ENCODE measurements at regions of chr3 and their contacts with region 1.

Region 1: GRCh38 chr3:194682694-194683310 is 2.9 kb upstream of the FAM43A start:
- DNase-seq: peak; percentile 74
- H3K4me3 Mint-ChIP-seq: no peak overlapping the region
- H3K27ac Mint-ChIP-seq: no peak overlapping the region
- H3K4me1 Mint-ChIP-seq: peaks cover 29% of the 10 kb centered on the region
- H3K27me3 Mint-ChIP-seq: peaks cover 13% of the 10 kb centered on the region

Region 2: DNA sequence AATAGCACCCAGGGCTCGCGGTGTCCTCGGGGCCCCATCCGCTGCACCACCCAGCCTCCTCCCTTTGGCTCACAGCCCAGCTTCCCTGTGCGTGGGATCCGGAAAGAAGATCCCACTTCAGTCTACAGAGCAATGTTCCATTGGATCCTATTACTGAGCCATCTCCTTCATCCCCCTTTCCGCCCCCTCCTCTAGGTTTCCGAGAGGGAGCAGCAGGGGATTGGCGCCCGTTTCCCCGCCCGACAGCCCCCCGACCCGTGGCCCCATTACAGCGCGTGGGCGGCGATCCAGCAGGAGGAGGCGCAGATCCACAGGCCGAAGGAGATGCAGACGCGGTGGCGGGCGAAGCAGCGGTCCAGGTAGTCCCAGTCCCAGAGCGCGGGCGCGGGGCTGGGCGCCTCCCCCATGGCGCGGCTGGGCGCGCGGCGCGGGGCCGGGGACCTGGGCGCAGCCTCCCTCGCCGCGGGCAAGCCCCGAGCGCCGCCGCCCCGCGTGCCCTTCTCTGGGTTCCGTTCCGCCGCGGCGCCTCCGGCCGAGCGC is 49.9 kb before region 1 on chr3:
- CTCF ChIA-PET with region 1: no interaction called
- intact Hi-C with region 1: no loop called
- DNase-seq: peak; percentile 24
- H3K4me3 Mint-ChIP-seq: peak overlapping the region; percentile 85
- H3K27ac Mint-ChIP-seq: peak overlapping the region; percentile 53
- H3K4me1 Mint-ChIP-seq: peaks cover 6% of the 10 kb centered on the region
- H3K27me3 Mint-ChIP-seq: no peaks in the 10 kb centered on the region

Region 3: GRCh38 chr3:194700241-194700640 is 17.4 kb after region 1 on chr3:
- CTCF ChIA-PET with region 1: interaction called, 10 read pairs
- intact Hi-C with region 1: no loop called
- DNase-seq: no peak
- H3K4me3 Mint-ChIP-seq: no peak overlapping the region
- H3K27ac Mint-ChIP-seq: no peak overlapping the region
- H3K4me1 Mint-ChIP-seq: no peaks in the 10 kb centered on the region
- H3K27me3 Mint-ChIP-seq: no peaks in the 10 kb centered on the region

Region 4: DNA sequence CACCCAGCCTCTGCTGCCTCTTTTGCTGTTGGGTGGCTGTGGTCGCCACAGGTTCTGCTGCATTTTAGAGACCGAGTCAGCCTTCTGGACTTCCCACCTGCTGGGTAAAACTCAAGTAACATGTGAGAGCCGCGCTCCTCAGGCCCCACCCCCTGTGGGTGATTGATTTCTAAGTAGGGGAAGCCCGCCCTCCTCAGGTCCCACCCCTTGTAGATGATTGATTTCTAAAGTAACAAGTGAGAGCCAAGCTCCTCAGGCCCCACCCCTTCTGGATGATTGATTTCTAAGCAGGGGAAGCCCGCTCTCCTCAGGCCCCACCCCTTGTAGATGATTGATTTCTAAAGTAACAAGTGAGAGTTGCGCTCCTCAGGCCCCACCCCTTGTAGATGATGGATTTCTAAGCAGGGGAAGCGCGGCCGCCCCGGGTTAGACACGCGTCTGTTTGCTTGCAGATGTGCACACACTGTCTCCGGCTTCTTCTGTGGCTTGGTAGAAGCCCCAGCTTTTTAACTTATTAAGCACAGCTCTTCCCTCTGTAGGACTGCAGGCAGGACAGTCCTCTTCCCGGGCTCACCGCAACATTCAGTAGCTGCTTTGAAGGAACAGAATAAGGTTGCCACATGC is 86.3 kb after region 1 on chr3:
- CTCF ChIA-PET with region 1: interaction called, 5 read pairs
- intact Hi-C with region 1: loop called (anchors 1 kb)
- DNase-seq: peak; percentile 99
- H3K4me3 Mint-ChIP-seq: peak overlapping the region; percentile 70
- H3K27ac Mint-ChIP-seq: peak overlapping the region; percentile 66
- H3K4me1 Mint-ChIP-seq: peaks cover 11% of the 10 kb centered on the region
- H3K27me3 Mint-ChIP-seq: no peaks in the 10 kb centered on the region

Region 5: DNA sequence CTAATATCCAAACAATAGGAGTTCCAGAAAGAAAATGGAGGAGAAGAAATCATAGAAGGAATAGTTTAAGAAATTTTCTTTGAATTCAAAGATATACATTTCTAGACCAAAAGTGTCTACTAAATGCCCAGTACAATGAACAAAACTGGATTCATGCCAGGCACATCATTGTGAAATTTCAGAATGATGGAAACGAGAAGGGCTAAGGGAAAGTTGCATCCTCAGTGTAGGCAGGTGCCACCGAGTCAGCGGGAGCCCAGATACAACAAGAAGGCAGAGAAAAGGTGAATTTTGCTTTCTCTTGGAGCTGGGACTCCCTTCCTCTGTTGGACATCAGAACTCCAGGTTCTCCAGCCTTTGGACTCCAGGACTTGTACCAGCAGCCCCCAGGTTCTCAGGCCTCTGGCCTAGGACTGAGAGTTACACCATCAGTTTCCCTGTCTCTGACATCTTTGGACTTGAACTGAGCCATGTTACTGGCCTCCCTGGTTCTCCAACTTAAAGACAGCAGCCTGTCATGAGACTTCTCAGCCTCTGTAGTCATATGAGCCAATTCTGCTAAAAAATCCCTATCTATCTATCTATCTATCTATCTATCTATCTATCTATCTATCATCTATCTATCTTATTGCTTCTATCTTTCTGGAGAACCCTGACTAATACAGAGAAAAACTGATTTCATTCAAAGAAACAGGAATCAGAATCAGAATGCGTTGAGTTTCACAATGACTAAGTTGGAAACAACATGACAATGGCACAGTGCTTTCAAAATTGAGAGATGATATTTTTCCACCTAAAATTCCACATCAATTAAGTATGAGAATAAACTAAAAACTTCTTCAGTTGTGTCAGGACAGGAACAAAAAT is 210.6 kb after region 1 on chr3:
- CTCF ChIA-PET with region 1: no interaction called
- intact Hi-C with region 1: loop called (anchors 5 kb)
- DNase-seq: no peak
- H3K4me3 Mint-ChIP-seq: no peak overlapping the region
- H3K27ac Mint-ChIP-seq: no peak overlapping the region
- H3K4me1 Mint-ChIP-seq: peaks cover 9% of the 10 kb centered on the region
- H3K27me3 Mint-ChIP-seq: peaks cover 28% of the 10 kb centered on the region

Region 6: GRCh38 chr3:195106418-195106906 is 423.7 kb after region 1 on chr3:
- CTCF ChIA-PET with region 1: interaction called, 27 read pairs
- intact Hi-C with region 1: loop called (anchors 1 kb)
- DNase-seq: peak; percentile 63
- H3K4me3 Mint-ChIP-seq: peak overlapping the region; percentile 22
- H3K27ac Mint-ChIP-seq: no peak overlapping the region
- H3K4me1 Mint-ChIP-seq: no peaks in the 10 kb centered on the region
- H3K27me3 Mint-ChIP-seq: no peaks in the 10 kb centered on the region

Region 7: DNA sequence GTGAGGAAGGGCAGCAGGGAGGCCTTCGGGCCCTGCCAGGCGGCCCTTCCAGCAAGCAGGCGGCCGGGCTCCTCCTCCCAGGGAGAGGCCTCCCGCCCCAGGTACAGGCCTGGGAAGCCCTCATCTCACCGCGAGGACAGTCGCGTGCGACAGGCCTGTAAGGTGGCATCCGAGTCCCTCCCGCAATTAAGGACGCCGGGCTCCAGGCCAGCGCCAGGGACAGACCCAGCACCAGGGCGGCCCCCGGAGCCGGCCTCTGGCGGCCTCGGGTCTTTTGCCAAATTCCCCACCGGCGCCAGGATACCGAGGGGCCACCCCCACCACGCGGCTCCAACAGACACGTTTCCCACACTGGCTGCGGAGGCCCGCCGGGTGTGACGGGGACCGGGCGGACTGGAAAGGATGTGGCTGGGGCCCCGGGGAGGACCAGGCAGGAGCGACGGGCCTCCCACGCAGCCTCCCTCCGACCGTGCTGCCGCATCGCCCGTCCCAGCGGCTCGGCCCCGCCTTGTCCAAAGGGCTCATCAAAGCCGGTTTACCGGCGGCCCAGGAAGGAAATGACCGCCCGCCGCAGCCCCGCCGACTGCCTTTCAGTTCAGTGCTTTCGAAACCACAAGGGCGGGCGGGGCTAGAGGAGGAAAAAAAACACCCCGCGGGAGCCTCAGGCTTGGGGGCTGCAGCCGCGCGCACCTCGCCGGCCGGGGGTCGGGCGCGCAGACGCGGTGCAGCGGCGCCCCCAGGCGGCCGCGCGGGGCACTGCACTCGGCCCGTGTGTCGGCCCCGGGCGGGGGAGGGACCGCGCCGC is 576.9 kb after region 1 on chr3:
- CTCF ChIA-PET with region 1: interaction called, 23 read pairs
- intact Hi-C with region 1: loop called (anchors 1 kb)
- DNase-seq: peak; percentile 79
- H3K4me3 Mint-ChIP-seq: peak overlapping the region; percentile 55
- H3K27ac Mint-ChIP-seq: no peak overlapping the region
- H3K4me1 Mint-ChIP-seq: peaks cover 13% of the 10 kb centered on the region
- H3K27me3 Mint-ChIP-seq: no peaks in the 10 kb centered on the region

Measured in activated naive CD4-positive, alpha-beta T cell treated with anti-CD3 and anti-CD28 coated beads for 36 hours (primary cell).